ENCODE measurements at regions of chr7 and their contacts with region 1.

Region 1: DNA sequence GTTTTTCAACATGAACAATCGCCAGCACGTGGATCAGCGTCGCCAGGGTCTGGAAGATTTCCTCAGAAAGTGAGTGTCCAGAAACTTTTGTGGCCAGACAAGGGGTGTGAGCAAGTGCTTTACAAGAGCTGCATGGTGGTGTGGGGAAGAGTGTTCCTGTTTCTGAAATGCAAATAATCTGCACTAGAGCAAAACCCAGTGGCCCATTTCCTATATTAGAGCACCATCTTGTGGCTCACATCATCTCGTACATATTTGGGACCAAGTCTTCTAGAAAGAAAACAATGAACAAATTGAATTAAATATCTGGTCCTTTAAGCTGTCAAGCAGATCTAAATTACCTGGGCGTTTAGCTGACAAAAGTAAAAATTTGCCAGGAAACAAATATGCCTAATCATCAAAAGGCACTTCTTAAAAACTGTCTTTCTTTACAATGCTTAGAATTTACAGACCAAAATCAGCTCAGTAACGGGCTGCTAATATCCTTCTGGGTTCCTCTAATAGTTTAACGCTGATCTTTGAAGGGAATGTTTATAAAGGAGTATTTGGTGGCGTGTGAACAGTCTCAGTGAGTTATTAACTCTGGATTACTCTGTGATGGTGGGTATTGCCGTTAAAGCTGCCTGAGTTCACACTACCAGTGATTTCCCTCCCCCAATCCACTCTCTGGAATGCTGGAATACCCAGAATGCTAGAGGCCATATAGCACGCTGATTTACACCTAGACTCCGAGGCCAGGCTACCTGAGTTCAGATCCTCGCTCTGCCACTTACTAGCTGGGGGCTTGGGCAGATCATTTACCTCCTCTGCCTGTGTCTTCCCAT is 73.6 kb downstream of the SNX10 start:
- DNase-seq: no peak
- ATAC-seq: peak; percentile 82
- H3K4me3 Mint-ChIP-seq: no peak overlapping the region
- H3K27ac Mint-ChIP-seq: no peak overlapping the region
- H3K4me1 Mint-ChIP-seq: peaks cover 9% of the 10 kb centered on the region
- H3K27me3 Mint-ChIP-seq: no peaks in the 10 kb centered on the region
- CTCF ChIP-seq: peak; percentile 51

Region 2: DNA sequence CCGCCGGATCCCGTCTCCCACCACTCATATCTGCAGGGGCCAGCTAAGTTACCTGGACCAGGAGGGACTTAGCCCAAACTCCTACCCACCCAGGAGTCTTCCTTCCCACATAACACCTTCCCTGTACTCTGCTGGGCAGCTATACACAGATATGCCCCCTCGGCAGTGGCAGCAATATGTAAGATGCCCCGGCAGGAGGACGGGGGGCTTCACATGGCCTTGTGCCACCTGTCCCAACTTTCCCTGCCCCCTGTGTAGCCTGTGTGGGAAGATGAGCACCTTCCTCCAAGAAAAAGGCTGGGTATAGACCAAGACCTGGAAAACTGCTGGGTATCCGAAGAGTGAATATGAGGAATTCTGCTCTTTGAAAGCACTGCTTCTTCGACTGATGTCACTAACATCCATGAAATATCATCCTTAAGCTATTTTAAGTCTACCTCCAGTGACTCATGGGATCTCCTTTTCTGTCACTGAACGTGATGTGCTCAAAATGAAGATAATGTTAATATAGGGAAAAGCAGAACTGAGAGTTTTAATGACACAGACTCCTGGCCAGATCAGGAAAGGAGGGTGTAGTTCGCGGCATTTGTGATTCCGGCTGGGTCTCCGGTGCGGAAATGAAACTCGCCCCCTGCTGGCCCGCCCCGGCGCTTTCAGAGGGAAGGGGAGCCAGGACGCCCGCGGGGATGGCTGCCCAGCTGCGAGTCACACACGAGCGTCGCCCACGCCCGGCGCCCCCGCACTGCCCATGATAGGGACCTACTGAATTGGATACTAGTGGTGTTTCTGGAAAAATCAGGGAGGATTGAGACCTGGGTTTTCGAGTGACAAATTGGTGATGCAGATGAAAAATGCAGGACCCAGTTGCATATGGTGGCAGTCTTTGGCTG is 470.1 kb before region 1 on chr7:
- CTCF ChIA-PET with region 1: interaction called, 77 read pairs
- POLR2A ChIA-PET with region 1: no interaction called
- DNase-seq: peak; percentile 75
- ATAC-seq: peak; percentile 52
- H3K4me3 Mint-ChIP-seq: peak overlapping the region; percentile 81
- H3K27ac Mint-ChIP-seq: 0 out of 2 replicates have a peak overlapping the region, but pooled peaks have one; percentile 33
- H3K4me1 Mint-ChIP-seq: peaks cover 30% of the 10 kb centered on the region
- H3K27me3 Mint-ChIP-seq: peaks cover 3% of the 10 kb centered on the region; the same call in 1 of the 2 replicates
- CTCF ChIP-seq: peak; percentile 62; the same call in 1 of the 2 replicates

Region 3: DNA sequence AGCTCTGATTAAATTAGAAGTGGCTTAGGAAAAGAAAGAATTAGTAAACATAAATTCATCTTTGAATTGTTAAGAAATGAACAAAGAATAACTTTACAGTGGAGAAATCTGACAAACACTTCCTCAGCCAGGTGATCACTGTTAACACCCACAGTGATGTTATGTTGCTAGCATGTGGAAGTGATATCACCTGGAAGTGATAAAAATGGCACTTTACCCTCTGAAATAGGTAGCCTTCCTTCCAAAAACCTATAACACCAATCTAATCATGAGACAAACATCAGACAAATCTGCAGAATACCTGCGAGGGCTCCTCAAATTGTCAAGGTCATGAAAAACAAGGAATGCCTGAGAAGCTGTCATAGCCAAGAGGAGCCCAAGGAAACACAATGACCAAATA is 14.1 kb before region 1 on chr7:
- CTCF ChIA-PET with region 1: interaction called, 18 read pairs
- POLR2A ChIA-PET with region 1: no interaction called
- DNase-seq: no peak
- ATAC-seq: no peak
- H3K4me3 Mint-ChIP-seq: no peak overlapping the region
- H3K27ac Mint-ChIP-seq: no peak overlapping the region
- H3K4me1 Mint-ChIP-seq: no peaks in the 10 kb centered on the region
- H3K27me3 Mint-ChIP-seq: no peaks in the 10 kb centered on the region
- CTCF ChIP-seq: no peak

Region 4: DNA sequence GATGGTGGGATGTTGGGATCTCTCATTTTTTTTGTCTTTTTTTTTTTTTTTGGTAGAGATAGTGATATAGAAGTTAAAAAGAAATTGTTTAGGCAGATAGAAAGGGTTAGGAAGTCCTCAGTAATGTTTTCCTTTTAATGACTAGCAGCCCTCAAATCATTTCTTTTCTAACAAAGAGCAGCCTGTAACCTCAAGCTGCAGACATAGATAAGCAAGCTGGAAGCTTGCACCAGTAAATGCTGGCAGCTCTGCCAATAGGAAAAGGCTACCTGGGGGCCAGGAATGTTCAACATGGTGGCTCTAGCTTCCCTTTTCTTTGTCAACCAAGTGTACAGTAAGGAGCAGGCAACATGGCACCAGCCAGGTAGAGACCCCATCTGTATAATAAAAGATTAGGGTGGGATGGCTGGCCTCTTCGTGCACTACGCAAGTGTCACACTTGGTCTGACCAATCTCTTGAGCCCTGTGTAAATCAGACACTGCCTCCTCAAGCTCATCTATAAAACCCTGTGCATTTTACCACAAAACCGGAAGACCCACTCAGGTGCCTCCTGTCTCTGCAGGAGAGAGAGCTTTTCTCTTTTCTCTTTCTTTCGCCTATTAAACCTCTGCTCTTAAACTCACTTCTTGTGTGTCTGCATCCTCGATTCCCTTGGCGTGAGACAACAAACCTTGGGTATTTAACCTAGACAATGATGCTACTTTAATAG is 139.3 kb after region 1 on chr7:
- CTCF ChIA-PET with region 1: interaction called, 11 read pairs
- POLR2A ChIA-PET with region 1: no interaction called
- DNase-seq: no peak
- ATAC-seq: no peak
- H3K4me3 Mint-ChIP-seq: no peak overlapping the region
- H3K27ac Mint-ChIP-seq: no peak overlapping the region
- H3K4me1 Mint-ChIP-seq: peaks cover 15% of the 10 kb centered on the region
- H3K27me3 Mint-ChIP-seq: no peaks in the 10 kb centered on the region; the same call in 1 of the 2 replicates
- CTCF ChIP-seq: no peak

Region 5: DNA sequence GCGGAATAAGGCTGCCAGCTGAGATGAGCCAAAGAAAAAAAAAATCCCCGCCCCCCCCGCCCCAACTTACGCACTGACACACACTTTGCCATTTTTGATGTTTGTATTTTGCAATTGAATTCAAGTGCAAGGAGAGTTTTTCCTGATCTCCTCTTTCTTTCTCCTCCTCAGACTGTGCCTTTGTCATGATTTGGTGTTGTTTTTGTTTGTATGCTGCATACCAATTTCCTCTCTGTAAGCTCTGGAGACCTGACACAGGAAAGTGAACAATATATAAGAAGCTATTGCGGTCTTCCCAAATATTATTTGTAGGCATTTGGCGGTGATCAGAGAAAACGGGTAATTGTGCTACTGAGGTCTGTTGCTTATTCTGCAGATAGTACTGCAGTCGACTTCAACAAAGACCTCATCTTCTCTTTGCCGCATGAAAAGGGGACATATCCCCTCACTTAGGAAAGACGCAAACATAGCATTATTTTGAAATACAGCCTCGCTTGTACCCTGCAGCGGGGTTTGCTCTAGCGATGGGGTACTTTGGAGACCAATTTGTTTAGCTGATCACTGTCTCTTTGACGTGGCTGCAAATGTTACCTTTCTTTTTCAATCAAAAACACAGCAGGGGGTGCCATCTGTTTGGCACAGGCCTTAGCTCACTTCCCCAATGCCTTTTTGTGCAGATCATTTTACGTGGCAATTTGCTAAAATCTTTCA is 292.6 kb after region 1 on chr7:
- CTCF ChIA-PET with region 1: interaction called, 17 read pairs
- POLR2A ChIA-PET with region 1: no interaction called
- DNase-seq: no peak
- ATAC-seq: peak; percentile 44
- H3K4me3 Mint-ChIP-seq: peak overlapping the region; percentile 51
- H3K27ac Mint-ChIP-seq: peak overlapping the region; percentile 64
- H3K4me1 Mint-ChIP-seq: peaks cover 66% of the 10 kb centered on the region
- H3K27me3 Mint-ChIP-seq: no peaks in the 10 kb centered on the region
- CTCF ChIP-seq: no peak

Region 6: DNA sequence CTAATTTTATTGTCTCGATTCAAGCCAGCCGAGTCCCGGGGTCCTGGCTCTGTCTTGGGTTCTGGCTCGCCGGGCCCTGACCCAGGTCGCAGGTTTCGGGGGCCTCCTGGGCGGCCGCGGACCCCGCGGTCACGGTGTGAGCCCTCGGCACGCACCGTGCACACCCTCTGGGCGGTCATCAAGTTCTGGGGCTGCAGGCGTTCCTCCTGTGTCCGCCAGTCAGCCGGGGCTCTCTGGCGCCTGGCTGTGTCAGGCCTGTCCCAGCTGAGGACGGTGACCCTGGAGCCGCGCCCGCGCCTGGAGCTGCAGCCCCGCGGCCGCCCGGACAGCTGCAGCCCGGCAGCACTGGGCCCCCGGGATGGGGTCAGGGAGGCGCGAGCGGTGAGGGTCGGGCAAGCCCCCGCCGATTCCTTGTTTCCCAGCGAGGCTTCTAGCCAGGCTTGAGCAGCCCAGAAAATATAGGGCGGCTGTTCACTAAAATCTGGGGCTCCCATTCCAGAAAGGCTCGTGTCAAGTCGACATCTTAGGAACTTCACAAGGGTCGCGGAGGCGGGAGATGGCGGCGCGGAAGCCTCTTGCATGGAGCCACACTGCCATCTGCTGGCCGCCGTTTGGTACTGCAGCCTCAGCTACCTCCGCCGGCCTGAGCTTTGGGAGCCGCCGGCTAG is 795.4 kb after region 1 on chr7:
- CTCF ChIA-PET with region 1: interaction called, 16 read pairs
- POLR2A ChIA-PET with region 1: no interaction called
- DNase-seq: peak; percentile 92
- ATAC-seq: peak; percentile 43
- H3K4me3 Mint-ChIP-seq: peak overlapping the region; percentile 29
- H3K27ac Mint-ChIP-seq: no peak overlapping the region
- H3K4me1 Mint-ChIP-seq: peaks cover 12% of the 10 kb centered on the region
- H3K27me3 Mint-ChIP-seq: peaks cover 100% of the 10 kb centered on the region
- CTCF ChIP-seq: peak; percentile 100